ENCODE measurements at regions of chr7 and their contacts with region 1.

Region 1: DNA sequence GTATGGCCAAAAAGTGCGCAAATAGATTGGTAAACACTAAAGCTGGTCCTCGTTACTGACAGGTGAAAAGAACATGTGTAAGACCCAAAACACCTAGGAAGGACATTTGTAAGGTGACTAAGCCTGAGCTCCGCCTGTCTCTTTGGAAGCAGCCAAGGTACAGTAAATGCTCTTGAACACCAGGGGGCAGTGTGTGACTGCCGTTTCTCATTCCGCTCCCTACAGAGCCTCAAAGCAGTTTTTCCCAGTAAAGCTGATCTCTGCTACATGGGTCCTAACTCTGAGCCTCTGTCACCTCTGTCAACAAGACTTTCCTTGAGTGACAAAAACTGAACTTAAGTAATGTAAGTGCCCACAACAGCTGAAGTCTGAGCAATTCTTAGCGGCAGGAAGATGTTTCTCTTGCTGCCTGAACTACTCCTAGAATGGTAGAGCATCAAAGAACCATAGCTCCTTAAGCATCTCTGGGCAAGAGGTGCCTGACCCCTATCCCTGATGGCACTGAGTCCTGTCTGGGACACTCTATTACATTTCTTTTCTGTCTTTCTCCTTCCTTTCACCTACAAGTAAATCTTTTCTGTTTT is 238.0 kb upstream of the INHBA start:
- DNase-seq: peak; percentile 73
- CTCF ChIP-seq: peak; percentile 88

Region 2: GRCh38 chr7:41869091-41869490 is 71.8 kb before region 1 on chr7:
- CTCF ChIA-PET with region 1: no interaction called
- POLR2A ChIA-PET with region 1: no interaction called
- DNase-seq: no peak
- CTCF ChIP-seq: no peak

Region 3: DNA sequence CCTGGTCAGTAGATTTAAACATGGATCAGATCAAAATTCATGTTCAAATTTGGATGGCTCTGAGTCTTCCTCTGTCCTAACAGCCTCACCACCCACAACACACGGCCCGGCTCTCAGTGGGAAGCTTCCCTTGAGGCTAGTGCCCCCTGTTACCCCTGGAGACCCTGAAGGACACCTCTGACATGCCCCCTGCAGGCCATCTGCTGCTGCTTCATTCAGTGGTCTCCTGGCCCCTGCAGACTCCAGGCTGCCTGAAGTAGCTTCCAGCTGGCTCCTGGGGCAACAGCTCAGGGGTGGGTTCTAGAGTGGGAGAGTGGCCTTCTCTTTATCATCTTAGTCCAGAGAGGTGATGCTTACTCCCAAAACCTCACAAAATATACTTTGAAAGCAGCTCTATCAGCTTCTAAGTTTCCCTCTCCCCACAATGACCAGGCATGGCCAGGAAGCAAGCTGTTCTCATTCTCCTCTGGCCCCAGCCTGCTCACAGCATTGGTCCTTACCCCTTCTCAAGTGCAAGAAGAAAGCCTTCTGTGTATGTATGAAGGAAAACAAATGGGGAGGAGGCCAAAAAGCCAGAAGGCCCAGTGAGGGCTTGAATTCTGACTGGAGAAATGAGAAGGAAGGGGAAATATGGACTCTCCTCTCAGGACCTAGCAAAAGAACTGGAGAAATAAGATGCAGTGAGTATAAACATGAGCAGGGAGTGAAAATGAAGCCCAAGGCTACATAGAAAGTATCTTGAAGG is 48.3 kb before region 1 on chr7:
- CTCF ChIA-PET with region 1: interaction called, 19 read pairs
- POLR2A ChIA-PET with region 1: no interaction called
- DNase-seq: no peak
- CTCF ChIP-seq: peak; percentile 22

Region 4: GRCh38 chr7:41918597-41918996 is 22.3 kb before region 1 on chr7:
- CTCF ChIA-PET with region 1: interaction called, 10 read pairs
- POLR2A ChIA-PET with region 1: no interaction called
- DNase-seq: no peak
- CTCF ChIP-seq: no peak

Region 5: DNA sequence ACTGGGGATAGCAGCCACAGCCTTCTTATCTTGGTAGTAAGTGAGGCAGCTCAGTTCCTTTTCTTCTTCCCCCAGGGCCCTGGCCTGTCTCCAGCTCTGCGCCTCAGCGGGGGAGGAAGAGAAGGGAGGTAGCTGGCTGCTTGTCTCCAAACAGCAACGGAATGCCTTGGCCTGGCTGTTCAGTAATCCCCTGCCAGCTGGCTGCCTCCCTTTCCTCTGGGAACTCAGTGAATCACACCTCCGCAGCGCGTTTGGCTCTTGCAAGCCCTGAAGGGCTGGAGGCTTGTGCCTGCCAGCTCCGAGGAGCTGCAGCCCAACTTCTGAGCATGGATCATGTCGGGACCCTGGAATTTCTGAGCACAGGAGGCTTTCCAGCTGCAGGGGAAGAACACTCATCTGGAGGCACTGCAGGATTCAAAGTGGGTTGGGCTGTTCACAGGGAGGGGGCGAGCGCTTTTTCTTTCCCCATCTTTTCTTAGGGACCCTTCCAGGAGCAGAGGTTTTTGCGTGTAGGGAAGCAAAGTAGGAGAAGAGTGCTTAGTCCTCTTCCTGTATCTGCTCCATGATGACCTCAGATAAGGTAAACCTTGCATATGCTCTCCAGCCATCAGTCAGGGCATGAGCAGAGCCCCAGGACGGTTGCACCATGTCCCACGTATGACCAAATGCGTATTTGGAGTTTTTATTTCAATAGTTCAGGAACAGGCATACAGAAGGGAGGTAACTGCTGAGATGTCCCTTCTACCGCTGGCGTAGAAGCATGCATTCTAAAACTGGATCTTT is 15.2 kb after region 1 on chr7:
- CTCF ChIA-PET with region 1: interaction called, 40 read pairs
- POLR2A ChIA-PET with region 1: no interaction called
- DNase-seq: no peak
- CTCF ChIP-seq: no peak

Region 6: DNA sequence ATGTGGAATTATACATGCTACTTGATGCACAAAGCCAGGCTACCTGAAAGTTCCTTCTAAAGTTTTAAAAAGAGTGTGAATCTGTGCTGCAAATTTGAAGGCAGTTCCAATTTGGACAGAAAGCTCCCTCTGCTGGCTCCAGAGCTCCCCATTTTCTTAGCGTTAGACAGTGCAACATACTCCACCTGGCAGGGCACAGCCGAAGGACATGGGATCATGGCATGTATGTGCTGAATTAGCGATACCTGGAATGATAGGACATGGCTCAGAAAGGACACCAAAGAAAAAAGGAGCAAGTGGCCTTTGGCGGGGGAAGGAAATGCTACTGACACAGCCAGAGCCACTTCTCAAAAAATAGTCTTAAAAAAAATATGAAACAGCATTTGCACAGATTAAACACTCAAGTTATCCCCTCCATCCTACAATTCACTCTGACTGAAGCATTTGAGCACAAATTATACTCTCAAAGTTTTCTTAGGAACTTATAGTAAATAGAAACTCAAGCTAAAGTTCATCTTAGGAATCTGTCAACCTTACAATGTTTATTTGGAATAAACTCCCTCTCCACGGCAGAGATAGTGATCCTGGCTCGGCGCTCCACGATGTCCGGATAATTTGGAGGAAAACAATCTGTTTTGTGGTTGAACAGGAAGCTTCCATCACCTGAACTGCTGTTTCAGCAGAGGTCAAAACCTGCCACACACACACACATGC is 891.0 kb after region 1 on chr7:
- CTCF ChIA-PET with region 1: interaction called, 12 read pairs
- POLR2A ChIA-PET with region 1: no interaction called
- DNase-seq: no peak
- CTCF ChIP-seq: peak; percentile 24

Region 7: GRCh38 chr7:43439631-43440401 is 1499.0 kb after region 1 on chr7:
- CTCF ChIA-PET with region 1: interaction called, 14 read pairs
- POLR2A ChIA-PET with region 1: no interaction called
- DNase-seq: peak; percentile 83
- CTCF ChIP-seq: peak; percentile 82

Measured in GM10248 (cell line).